Activated CD4-positive, alpha-beta memory T cell treated with anti-CD3 and anti-CD28 coated beads, Interleukin-2, amount 10 ng/mL, durations not matched to agents 7 days and 5 days (primary cell): ENCODE measurements at regions of chr15 and their contacts with region 1.

Region 1: GRCh38 chr15:75921729-75922703 is 18.3 kb downstream of the FBXO22 start:
- DNase-seq: no peak
- H3K4me3 Mint-ChIP-seq: no peak overlapping the region
- H3K27ac Mint-ChIP-seq: no peak overlapping the region
- H3K4me1 Mint-ChIP-seq: peaks cover 35% of the 10 kb centered on the region
- H3K27me3 Mint-ChIP-seq: no peaks in the 10 kb centered on the region

Region 2: DNA sequence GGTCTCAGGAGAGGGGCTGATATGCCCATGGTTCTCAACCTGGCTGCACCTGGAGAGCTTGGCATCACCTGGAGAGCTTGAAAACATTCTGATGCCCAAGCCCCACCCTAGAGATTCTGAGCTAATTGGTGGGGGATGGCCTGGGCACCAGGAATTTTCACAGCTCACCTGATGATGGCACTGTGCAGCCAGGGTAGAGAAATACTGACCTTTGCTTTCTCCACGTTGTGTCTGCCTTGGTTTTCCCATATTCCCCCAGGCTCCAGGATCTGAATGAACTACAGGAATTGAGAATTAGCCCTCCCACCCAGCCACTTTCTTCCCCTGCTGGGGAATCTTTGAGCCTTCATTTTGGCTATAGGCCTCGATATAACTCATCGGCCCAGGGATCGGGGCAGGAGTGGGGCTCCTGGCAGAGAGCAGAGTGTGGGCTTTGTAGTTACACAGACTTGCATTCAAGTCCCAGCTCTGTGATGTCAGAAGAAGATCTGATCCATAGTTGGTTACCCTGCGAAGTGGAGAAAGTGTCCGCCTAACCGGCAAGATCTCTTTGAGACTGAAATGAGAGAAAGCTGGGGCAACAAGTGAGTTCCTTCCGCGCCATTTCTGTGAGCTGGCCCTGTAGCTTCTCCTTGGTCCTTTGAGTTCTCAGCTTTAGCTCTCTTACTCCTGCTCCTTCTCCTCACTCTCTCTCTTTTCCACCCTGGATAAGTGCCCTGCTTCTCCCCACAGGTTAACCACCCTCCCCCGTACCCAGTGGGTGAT is 111.8 kb before region 1 on chr15:
- CTCF ChIA-PET with region 1: interaction called, 28 read pairs
- POLR2A ChIA-PET with region 1: no interaction called
- DNase-seq: peak; percentile 32
- H3K4me3 Mint-ChIP-seq: no peak overlapping the region
- H3K27ac Mint-ChIP-seq: no peak overlapping the region
- H3K4me1 Mint-ChIP-seq: no peaks in the 10 kb centered on the region
- H3K27me3 Mint-ChIP-seq: peaks cover 11% of the 10 kb centered on the region